Ovary (tissue), 10 donors: ENCODE measurements at regions of chr4 and their contacts with region 1.

Region 1: DNA sequence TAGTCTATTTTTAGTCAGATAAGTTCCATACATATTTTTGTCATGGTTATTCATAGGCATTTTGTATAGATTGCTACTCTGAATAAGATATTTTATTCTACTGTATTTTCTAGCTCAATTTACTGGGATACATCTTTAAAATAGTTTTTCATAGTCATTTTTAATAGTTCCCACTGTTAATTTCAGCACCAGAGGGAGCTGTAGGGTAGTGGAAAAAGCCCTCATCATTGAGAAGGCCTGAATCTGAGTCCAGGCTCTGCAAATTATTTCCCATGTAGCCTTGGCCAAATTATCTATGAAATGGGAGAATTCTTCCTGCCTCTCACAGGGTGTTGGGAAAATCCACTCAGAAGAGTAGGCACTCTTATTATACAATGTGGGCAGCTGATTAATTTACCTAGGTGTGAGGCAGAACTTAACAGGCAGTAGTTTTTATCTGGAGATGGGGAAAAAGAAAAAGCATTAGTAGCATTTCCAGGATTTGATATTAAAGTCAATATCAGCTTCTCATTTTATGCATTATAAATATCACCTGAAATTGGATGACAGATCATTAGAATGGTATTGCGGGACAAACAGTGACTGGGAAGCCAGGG is 102.9 kb upstream of the PAQR3 start:
- DNase-seq: no peak
- H3K4me3 ChIP-seq: no peak overlapping the region
- H3K27ac ChIP-seq: no peak overlapping the region
- H3K4me1 ChIP-seq: no peaks in the 10 kb centered on the region
- H3K27me3 ChIP-seq: no peaks in the 10 kb centered on the region
- CTCF ChIP-seq: peak in 1 of 3 donors; percentile 46
- EP300 ChIP-seq: no peak
- POLR2A ChIP-seq: no peak

Region 2: DNA sequence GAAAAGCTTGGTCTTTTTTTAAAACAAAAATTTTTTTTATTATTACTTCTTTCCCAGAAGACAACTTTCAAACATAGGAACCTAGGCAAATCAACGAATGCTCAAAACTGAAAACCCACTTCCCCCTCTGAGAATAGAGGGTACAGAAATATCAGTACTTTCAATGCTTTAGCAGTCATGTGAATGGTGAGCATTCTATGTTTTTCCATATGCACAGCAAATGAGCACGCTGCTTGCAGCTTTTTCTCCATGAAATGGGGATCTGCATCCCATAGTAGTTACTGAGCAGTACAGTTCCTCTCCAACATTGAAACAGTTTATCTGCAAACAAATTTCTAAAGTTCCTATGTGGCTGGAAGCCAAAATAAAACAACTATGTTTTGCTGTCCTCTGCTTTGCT is 374.4 kb before region 1 on chr4:
- intact Hi-C with region 1: no loop called
- DNase-seq: no peak
- H3K4me3 ChIP-seq: no peak overlapping the region
- H3K27ac ChIP-seq: no peak overlapping the region
- H3K4me1 ChIP-seq: no peaks in the 10 kb centered on the region
- H3K27me3 ChIP-seq: no peaks in the 10 kb centered on the region
- CTCF ChIP-seq: no peak
- EP300 ChIP-seq: no peak
- POLR2A ChIP-seq: no peak

Region 3: GRCh38 chr4:79284893-79285292 is 242.7 kb after region 1 on chr4:
- intact Hi-C with region 1: no loop called
- DNase-seq: no peak
- H3K4me3 ChIP-seq: no peak overlapping the region
- H3K27ac ChIP-seq: no peak overlapping the region
- H3K4me1 ChIP-seq: no peaks in the 10 kb centered on the region
- H3K27me3 ChIP-seq: no peaks in the 10 kb centered on the region
- CTCF ChIP-seq: no peak
- EP300 ChIP-seq: no peak
- POLR2A ChIP-seq: no peak

Region 4: DNA sequence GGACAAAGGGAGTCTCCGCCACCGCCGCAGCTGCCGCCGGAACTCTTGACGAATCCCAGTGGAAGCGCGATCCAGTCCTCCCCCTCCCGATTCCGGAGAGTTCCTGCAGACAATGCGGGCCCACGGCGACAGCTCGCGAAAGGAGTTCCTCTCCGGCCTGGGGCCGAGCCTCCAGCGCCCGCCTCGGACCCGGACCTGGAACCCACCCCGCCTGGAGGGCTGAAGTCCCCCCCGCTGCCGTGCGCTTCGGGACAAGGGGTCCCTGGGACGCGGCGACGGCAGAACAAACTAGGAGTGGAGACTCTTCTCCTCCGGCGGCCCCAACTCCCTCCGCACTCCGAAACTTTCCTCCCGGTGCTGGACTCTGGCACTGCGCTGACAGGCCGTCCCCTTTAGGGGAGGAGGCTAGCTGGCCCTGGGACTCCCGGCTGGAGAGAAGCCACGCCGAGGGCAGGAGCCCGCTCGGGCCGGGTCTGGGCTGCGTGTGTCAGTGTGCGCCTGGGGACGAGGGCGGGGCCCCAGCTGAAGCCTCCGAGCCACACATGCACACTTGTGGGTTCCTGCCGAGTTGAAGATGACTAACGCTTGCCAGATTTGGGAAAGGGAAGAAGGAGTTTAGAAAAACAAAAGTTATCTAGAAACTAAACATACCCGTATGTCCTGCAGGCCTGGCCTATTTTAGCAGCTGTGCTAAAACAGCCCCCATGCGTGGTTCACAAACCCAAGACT is 1030.7 kb after region 1 on chr4 and contains the start of gene ANTXR2:
- intact Hi-C with region 1: loop called in 1 of 4 experiments (anchors 5 kb)
- DNase-seq: peak; percentile 87 to 94 (median 88)
- H3K4me3 ChIP-seq: peak within 1 kb of the TSS; percentile 93
- H3K27ac ChIP-seq: peak within 1 kb of the TSS; percentile 84 to 96
- H3K4me1 ChIP-seq: peaks cover 4% of the 10 kb centered on the region
- H3K27me3 ChIP-seq: no peaks in the 10 kb centered on the region
- CTCF ChIP-seq: no peak
- EP300 ChIP-seq: no peak
- POLR2A ChIP-seq: peak; percentile 32
- total RNA-seq, gene ANTXR2: 78.3 to 230 (median 88.7) TPM

Region 5: GRCh38 chr4:80184053-80184790 is 1142.0 kb after region 1 on chr4:
- intact Hi-C with region 1: loop called in 1 of 4 experiments (anchors 10 kb)
- DNase-seq: peak; percentile 91 to 96 (median 93)
- H3K4me3 ChIP-seq: peak overlapping the region; percentile 78
- H3K27ac ChIP-seq: peak overlapping the region; percentile 73 to 86
- H3K4me1 ChIP-seq: peaks cover 14% of the 10 kb centered on the region
- H3K27me3 ChIP-seq: no peaks in the 10 kb centered on the region
- CTCF ChIP-seq: peak; percentile 85 to 99 (median 85)
- EP300 ChIP-seq: no peak
- POLR2A ChIP-seq: no peak

Region 6: DNA sequence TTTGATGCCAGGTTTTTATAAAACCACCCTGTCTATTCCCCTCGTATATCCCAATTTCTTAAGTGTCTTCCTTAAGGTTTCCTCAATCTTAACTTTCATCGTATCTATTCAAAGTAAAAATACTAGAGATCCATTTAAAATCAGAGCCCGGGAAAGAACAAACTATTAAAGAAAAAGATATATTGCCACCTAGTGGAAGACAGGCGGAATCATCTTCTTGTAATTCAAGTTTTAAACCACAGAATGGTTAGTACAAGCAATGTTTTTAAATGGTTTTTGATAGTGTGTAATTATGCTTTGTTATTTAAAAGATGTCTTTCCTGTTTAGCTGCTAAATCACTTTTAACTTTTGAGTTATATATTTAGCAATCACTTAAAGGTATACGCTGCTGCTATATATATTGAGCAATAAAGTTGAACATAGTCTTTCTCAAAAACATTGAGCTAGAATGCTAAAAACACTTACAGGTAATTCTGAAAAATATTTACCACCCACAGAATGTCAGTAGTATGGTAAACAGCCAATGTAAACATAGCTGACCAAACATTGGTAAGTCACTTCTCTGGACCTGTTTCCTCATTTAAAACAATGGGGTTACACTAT is 1173.4 kb after region 1 on chr4:
- intact Hi-C with region 1: loop called in 1 of 4 experiments (anchors 10 kb)
- DNase-seq: no peak
- H3K4me3 ChIP-seq: no peak overlapping the region
- H3K27ac ChIP-seq: no peak overlapping the region
- H3K4me1 ChIP-seq: no peaks in the 10 kb centered on the region
- H3K27me3 ChIP-seq: no peaks in the 10 kb centered on the region
- CTCF ChIP-seq: peak in 2 of 3 donors; percentile 19 to 39
- EP300 ChIP-seq: no peak
- POLR2A ChIP-seq: no peak